GM12878 (cell line): ENCODE measurements at regions of chr5 and their contacts with region 1.

Region 1: DNA sequence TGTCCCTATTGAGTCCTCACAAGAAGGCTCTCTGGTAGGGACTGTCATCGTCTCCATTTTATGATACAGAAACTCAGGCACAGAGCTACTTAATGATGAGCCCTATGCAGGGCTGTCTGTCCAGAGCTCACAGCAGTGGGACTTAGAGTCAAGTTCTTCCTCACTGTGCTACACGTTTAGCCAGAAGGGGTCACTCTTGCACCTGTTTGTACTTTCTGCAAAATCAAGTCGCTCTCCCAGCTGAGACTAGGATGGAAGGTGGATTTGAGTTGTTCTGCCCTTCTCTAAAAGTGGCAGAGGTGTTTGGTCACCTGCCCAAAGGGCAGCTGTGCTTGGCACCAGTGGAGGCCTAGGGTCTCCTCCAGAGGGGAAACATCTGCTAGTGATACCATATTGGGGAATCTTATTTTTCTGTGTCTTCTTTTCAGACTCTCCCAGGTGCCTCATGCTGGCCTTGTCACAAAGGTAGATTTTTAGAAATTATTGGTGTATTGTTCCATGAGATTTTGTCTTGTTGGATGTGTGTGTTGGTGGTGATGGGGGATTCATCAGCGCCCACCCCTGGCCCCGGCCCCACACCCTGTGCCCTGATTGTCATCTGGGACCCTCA is 104.2 kb downstream of the PPARGC1B start:
- DNase-seq: no peak
- ATAC-seq: peak; percentile 55
- H3K4me3 ChIP-seq: no peak overlapping the region
- H3K27ac ChIP-seq: no peak overlapping the region
- H3K4me1 ChIP-seq: peaks cover 8% of the 10 kb centered on the region
- H3K27me3 ChIP-seq: no peaks in the 10 kb centered on the region
- CTCF ChIP-seq: peak; percentile 72 to 78 (median 75)
- EP300 ChIP-seq: no peak
- POLR2A ChIP-seq: no peak
- RAD21 ChIP-seq: peak; percentile 68

Region 2: DNA sequence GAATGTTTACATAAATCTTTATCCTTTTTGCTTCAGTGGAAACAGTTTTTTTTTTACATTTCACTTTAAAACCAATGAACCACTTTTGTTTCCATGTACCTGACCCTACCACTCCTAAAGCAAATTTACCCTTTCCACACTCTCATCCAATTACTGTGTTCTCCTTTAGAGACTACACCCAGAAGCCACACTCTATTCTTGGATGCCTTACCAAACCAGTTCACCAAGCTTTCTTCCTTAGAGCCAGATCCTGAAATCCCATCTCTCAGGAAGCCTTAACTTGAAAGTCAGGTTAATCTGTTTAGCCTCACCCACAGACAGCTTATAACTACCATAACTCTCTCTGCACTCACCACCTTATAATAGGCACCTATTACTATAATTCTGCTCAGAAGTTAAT is 287.4 kb before region 1 on chr5:
- CTCF ChIA-PET with region 1: no interaction called
- POLR2A ChIA-PET with region 1: no interaction called
- RAD21 ChIA-PET with region 1: no interaction called
- SMC1A ChIA-PET with region 1: no interaction called
- in situ Hi-C with region 1: no loop called
- intact Hi-C with region 1: no loop called
- DNase-seq: no peak
- ATAC-seq: no peak
- H3K4me3 ChIP-seq: 0 out of 2 replicates have a peak overlapping the region, but pooled peaks have one; percentile 82
- H3K27ac ChIP-seq: no peak overlapping the region
- H3K4me1 ChIP-seq: no peaks in the 10 kb centered on the region; the same call in 1 of the 2 replicates
- H3K27me3 ChIP-seq: no peaks in the 10 kb centered on the region
- CTCF ChIP-seq: no peak
- EP300 ChIP-seq: no peak
- POLR2A ChIP-seq: no peak
- RAD21 ChIP-seq: no peak

Region 3: DNA sequence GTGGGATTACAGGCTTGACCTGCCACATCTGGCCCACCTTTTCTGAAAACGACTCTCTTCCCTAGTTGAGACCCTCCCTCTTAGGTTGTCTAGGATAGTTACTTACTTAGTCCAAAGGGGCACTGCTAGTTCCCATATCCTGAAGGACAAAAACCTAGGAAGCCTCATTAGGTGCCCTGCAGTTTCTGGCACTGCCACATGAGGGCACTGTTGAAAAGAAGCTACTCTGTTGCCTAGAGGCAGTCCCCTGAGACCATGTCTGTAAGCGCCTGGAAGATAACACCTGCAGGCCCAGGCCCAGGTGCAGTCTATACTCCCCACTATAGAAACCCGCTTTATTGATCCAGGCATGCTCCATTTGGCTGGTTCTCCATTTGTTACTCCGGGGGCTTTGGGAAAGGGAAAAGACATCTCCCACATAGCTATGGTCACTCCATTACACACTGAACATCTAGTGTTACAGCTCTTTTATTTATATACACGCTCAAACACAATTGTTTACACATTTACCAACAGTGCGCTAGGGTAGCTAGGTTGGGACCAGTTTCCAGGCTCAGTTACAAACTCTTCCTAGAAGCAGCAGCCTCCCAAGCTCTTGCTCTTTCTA is 177.7 kb before region 1 on chr5:
- CTCF ChIA-PET with region 1: interaction called, 349 read pairs
- POLR2A ChIA-PET with region 1: no interaction called
- RAD21 ChIA-PET with region 1: interaction called, 45 read pairs
- SMC1A ChIA-PET with region 1: interaction called, 210 read pairs
- in situ Hi-C with region 1: loop called (anchors 5 kb)
- intact Hi-C with region 1: no loop called
- DNase-seq: no peak
- ATAC-seq: peak; percentile 73
- H3K4me3 ChIP-seq: no peak overlapping the region
- H3K27ac ChIP-seq: no peak overlapping the region
- H3K4me1 ChIP-seq: no peaks in the 10 kb centered on the region
- H3K27me3 ChIP-seq: no peaks in the 10 kb centered on the region; a peak in 1 of 4 replicates
- CTCF ChIP-seq: peak; percentile 72 to 83 (median 76)
- EP300 ChIP-seq: no peak
- POLR2A ChIP-seq: no peak
- RAD21 ChIP-seq: peak; percentile 69

Region 4: GRCh38 chr5:149799119-149799623 is 35.2 kb before region 1 on chr5:
- CTCF ChIA-PET with region 1: interaction called, 11 read pairs
- POLR2A ChIA-PET with region 1: interaction called, 70 read pairs
- RAD21 ChIA-PET with region 1: interaction called, 139 read pairs
- SMC1A ChIA-PET with region 1: interaction called, 49 read pairs
- in situ Hi-C with region 1: no loop called
- intact Hi-C with region 1: no loop called
- DNase-seq: no peak
- ATAC-seq: no peak
- H3K4me3 ChIP-seq: no peak overlapping the region
- H3K27ac ChIP-seq: peak overlapping the region; percentile 18; the same call in 1 of the 2 replicates
- H3K4me1 ChIP-seq: peaks cover 31% of the 10 kb centered on the region
- H3K27me3 ChIP-seq: no peaks in the 10 kb centered on the region
- CTCF ChIP-seq: no peak
- EP300 ChIP-seq: no peak
- POLR2A ChIP-seq: no peak
- RAD21 ChIP-seq: no peak

Region 5: GRCh38 chr5:149822301-149822700 is 12.1 kb before region 1 on chr5:
- CTCF ChIA-PET with region 1: interaction called, 35 read pairs
- POLR2A ChIA-PET with region 1: no interaction called
- RAD21 ChIA-PET with region 1: interaction called, 5 read pairs
- SMC1A ChIA-PET with region 1: interaction called, 67 read pairs
- in situ Hi-C with region 1: no loop called
- intact Hi-C with region 1: no loop called
- DNase-seq: no peak
- ATAC-seq: no peak
- H3K4me3 ChIP-seq: no peak overlapping the region
- H3K27ac ChIP-seq: no peak overlapping the region
- H3K4me1 ChIP-seq: no peaks in the 10 kb centered on the region
- H3K27me3 ChIP-seq: no peaks in the 10 kb centered on the region
- CTCF ChIP-seq: no peak
- EP300 ChIP-seq: no peak
- POLR2A ChIP-seq: no peak
- RAD21 ChIP-seq: no peak

Region 6: GRCh38 chr5:149878039-149878747 is 43.8 kb after region 1 on chr5:
- CTCF ChIA-PET with region 1: no interaction called
- POLR2A ChIA-PET with region 1: no interaction called
- RAD21 ChIA-PET with region 1: no interaction called
- SMC1A ChIA-PET with region 1: no interaction called
- in situ Hi-C with region 1: no loop called
- intact Hi-C with region 1: no loop called
- DNase-seq: no peak
- ATAC-seq: no peak
- H3K4me3 ChIP-seq: no peak overlapping the region
- H3K27ac ChIP-seq: no peak overlapping the region
- H3K4me1 ChIP-seq: no peaks in the 10 kb centered on the region
- H3K27me3 ChIP-seq: no peaks in the 10 kb centered on the region
- CTCF ChIP-seq: no peak
- EP300 ChIP-seq: no peak
- POLR2A ChIP-seq: no peak
- RAD21 ChIP-seq: no peak

Region 7: GRCh38 chr5:149942199-149942598 is 107.8 kb after region 1 on chr5:
- CTCF ChIA-PET with region 1: no interaction called
- POLR2A ChIA-PET with region 1: no interaction called
- RAD21 ChIA-PET with region 1: no interaction called
- SMC1A ChIA-PET with region 1: no interaction called
- in situ Hi-C with region 1: no loop called
- intact Hi-C with region 1: no loop called
- DNase-seq: no peak
- ATAC-seq: no peak
- H3K4me3 ChIP-seq: no peak overlapping the region
- H3K27ac ChIP-seq: no peak overlapping the region
- H3K4me1 ChIP-seq: no peaks in the 10 kb centered on the region
- H3K27me3 ChIP-seq: no peaks in the 10 kb centered on the region; a peak in 1 of 4 replicates
- CTCF ChIP-seq: no peak
- EP300 ChIP-seq: no peak
- POLR2A ChIP-seq: no peak
- RAD21 ChIP-seq: no peak

Region 8: DNA sequence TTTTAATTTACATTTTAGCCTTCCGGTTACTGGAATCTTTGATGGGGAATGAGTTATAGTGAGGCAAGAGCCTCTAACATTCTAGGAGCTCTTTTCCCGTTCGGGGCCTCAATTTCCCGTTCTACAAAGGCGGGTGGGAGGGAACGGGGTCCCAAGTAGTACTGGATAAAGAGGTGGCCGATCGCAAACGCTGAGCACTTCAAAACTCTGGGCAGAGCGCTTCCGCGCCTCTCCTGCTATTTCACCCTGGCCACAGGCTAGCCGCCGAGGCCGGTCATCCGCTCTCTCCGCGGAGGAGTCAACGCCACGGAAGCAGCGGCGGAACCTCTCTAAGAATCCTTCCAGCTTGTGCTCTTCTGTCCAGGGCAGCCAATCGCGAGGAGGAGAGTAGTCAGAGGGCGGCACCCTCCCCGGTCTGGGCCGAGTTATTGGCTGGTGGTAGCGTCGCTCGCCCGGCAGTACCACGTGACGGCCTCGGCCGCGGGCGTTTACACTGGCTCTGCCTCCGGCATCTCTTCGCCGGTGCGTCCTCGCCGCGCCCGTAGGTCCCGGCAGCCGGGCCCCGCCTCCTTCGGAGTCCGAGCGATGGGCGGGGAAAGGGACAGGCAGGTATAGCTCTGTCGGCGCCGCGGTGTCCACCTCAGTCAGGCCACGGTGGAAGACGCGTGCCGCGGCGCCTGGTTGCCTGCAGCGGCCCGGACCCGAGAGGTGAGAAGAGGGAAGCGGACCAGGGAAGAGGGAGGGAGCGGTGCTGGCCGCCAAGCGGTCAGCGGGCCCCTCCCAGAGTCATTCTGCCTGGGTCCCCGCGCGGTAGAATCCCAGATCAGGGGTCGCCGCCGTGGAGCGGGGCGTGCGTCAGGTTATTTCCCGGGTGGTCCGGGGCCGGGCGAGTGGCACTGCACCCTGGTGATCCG is 126.2 kb after region 1 on chr5 and contains the start of gene SLC26A2:
- CTCF ChIA-PET with region 1: interaction called, 59 read pairs
- POLR2A ChIA-PET with region 1: interaction called, 6 read pairs
- RAD21 ChIA-PET with region 1: interaction called, 53 read pairs
- SMC1A ChIA-PET with region 1: interaction called, 13 read pairs
- in situ Hi-C with region 1: no loop called
- intact Hi-C with region 1: no loop called
- DNase-seq: peak; percentile 93
- ATAC-seq: peak; percentile 98
- H3K4me3 ChIP-seq: peak within 1 kb of the TSS; percentile 67
- H3K27ac ChIP-seq: peak within 1 kb of the TSS; percentile 70
- H3K4me1 ChIP-seq: peaks cover 12% of the 10 kb centered on the region
- H3K27me3 ChIP-seq: no peaks in the 10 kb centered on the region; a peak in 1 of 4 replicates
- CTCF ChIP-seq: no peak
- EP300 ChIP-seq: no peak; a peak in 1 of 4 replicates
- POLR2A ChIP-seq: peak; percentile 94
- RAD21 ChIP-seq: no peak
- polyA plus RNA-seq, gene SLC26A2: 1.7 to 1.9 TPM

Region 9: GRCh38 chr5:150106674-150107426 is 272.5 kb after region 1 on chr5:
- CTCF ChIA-PET with region 1: no interaction called
- POLR2A ChIA-PET with region 1: no interaction called
- RAD21 ChIA-PET with region 1: no interaction called
- SMC1A ChIA-PET with region 1: no interaction called
- in situ Hi-C with region 1: no loop called
- intact Hi-C with region 1: no loop called
- DNase-seq: no peak
- ATAC-seq: peak; percentile 34; the same call in 2 of the 3 replicates
- H3K4me3 ChIP-seq: no peak overlapping the region
- H3K27ac ChIP-seq: no peak overlapping the region
- H3K4me1 ChIP-seq: peaks cover 14% of the 10 kb centered on the region
- H3K27me3 ChIP-seq: no peaks in the 10 kb centered on the region
- CTCF ChIP-seq: no peak
- EP300 ChIP-seq: no peak
- POLR2A ChIP-seq: no peak
- RAD21 ChIP-seq: no peak